ENCODE measurements at regions of chr4 and their contacts with region 1.

Region 1: GRCh38 chr4:70559211-70559830 is 32.7 kb upstream of the AMBN start:
- DNase-seq: peak in 3 of 5 donors; percentile 20 to 40 (median 26)
- H3K4me3 ChIP-seq: no peak overlapping the region
- H3K27ac ChIP-seq: no peak overlapping the region
- H3K4me1 ChIP-seq: no peaks in the 10 kb centered on the region
- H3K27me3 ChIP-seq: no peaks in the 10 kb centered on the region
- CTCF ChIP-seq: peak in 2 of 3 donors; percentile 20 to 24
- EP300 ChIP-seq: no peak
- POLR2A ChIP-seq: no peak

Region 2: DNA sequence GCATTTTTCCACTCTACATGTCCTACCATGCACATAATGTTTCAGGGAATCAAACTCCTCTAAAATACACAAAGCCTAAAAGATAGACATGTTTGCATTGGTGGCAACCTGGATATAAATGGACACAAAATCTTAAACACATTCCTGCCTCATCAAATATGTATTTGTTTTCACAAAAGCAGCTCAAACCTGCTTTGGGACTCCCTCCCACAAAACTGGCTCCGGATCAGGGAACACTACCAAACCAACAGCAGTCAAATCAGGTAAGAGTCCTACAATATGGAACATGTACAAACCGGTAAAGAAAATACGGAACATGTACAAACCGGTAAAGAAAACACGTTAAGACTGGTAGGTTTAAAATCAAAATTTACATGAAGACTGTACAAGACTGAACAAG is 36.7 kb before region 1 on chr4:
- intact Hi-C with region 1: loop called in 1 of 4 experiments (anchors 2 kb)
- DNase-seq: no peak
- H3K4me3 ChIP-seq: no peak overlapping the region
- H3K27ac ChIP-seq: no peak overlapping the region
- H3K4me1 ChIP-seq: no peaks in the 10 kb centered on the region
- H3K27me3 ChIP-seq: no peaks in the 10 kb centered on the region
- CTCF ChIP-seq: no peak
- EP300 ChIP-seq: no peak
- POLR2A ChIP-seq: no peak

Region 3: DNA sequence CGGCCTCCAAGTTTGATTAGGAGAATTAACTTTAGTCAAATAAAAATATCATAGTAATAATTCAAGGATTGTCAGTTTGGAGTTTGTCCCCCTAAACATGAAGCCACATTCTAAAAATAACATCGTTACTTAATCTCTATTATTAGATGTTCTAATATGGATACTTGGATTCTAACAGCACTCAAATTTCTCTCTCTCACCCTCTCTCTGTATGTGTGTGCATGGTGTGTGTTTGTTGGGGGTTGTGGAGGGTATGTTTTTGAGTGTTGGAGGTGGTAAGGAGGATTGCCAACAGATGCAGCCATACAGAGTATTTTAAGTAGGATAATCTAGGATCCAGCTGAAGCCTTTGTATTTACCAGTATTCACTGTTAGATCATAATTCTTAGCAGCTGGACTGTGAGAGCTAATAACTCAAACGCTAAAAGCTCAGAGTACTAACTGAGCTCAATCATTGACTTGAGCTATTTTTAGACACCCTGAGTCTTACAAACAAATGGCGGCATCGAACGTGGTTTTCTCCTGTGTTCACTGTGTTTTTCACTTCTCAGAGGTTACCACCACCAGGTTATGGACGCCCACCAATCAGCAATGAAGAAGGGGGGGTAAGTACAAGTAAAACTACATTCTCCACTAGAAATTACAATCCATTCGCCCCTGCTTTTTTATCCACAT is 78.1 kb after region 1 on chr4:
- intact Hi-C with region 1: no loop called
- DNase-seq: no peak
- H3K4me3 ChIP-seq: no peak overlapping the region
- H3K27ac ChIP-seq: no peak overlapping the region
- H3K4me1 ChIP-seq: no peaks in the 10 kb centered on the region
- H3K27me3 ChIP-seq: no peaks in the 10 kb centered on the region
- CTCF ChIP-seq: no peak
- EP300 ChIP-seq: no peak
- POLR2A ChIP-seq: no peak